ENCODE measurements at regions of chr3 and their contacts with region 1.

Region 1: DNA sequence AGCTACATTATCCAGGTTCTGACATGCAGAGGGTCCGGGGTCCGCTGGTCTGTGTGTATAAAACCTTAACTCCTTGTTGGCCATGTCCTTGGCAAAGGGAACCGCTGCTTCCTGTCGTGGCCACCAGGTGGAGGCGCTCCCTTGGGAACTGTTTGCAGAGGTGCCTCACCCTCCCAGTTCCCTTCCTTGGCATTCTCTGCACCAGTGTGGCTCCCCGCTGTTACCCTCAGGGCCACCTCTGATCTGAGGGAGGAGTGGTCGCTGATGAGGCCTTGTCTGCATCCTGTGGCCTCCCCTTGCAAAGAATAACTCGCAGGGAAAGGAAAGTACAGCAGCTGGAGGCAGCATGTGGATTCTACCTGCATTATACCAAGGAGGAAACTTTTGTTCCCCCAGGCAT is 89.6 kb downstream of the CHRD start:
- DNase-seq: no peak
- ATAC-seq: no peak
- H3K4me3 ChIP-seq: no peak overlapping the region
- H3K27ac ChIP-seq: no peak overlapping the region
- H3K4me1 ChIP-seq: peaks cover 0 to 20% (median 13%) of the 10 kb centered on the region in 12 donors
- H3K27me3 ChIP-seq: peaks cover 0 to 4% (median 0%) of the 10 kb centered on the region in 9 donors
- CTCF ChIP-seq: peak in 9 of 12 donors; percentile 7 to 37 (median 30)
- POLR2A ChIP-seq: no peak

Region 2: GRCh38 chr3:183924956-183925355 is 544.5 kb before region 1 on chr3:
- intact Hi-C with region 1: no loop called
- DNase-seq: no peak
- ATAC-seq: no peak
- H3K4me3 ChIP-seq: no peak overlapping the region
- H3K27ac ChIP-seq: no peak overlapping the region
- H3K4me1 ChIP-seq: no peaks in the 10 kb centered on the region
- H3K27me3 ChIP-seq: no peaks in the 10 kb centered on the region
- CTCF ChIP-seq: no peak
- POLR2A ChIP-seq: no peak

Region 3: DNA sequence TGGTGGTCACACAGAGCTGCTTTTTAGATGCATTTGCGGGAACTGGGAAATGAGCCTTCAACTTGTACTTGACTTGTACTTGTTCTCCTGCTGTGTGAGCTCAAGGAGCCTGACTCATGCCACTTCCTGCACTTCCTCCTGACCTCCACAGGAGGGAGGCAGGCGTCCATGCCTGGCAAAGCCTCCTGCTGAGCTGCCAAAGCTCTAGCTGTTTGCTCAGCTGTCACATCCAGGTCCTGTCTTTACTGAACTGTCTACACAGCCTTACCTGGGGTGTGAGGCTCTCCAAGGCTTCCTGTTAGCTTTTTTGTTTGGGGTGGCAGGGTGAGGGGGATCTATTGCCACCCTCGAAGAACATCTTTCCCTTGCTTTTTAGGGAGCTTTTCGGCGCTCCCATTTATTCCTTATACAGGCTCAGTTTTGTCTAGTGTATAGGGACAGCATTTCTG is 97.8 kb before region 1 on chr3:
- intact Hi-C with region 1: loop called in 1 of 10 experiments (anchors 5 kb)
- DNase-seq: peak; percentile 71 to 88 (median 85)
- ATAC-seq: peak; percentile 78 to 91 (median 87)
- H3K4me3 ChIP-seq: no peak overlapping the region
- H3K27ac ChIP-seq: peak overlapping the region in 1 of 12 donors; percentile 10
- H3K4me1 ChIP-seq: peaks cover 0 to 32% (median 17%) of the 10 kb centered on the region in 12 donors
- H3K27me3 ChIP-seq: peaks cover 0 to 11% (median 4%) of the 10 kb centered on the region in 9 donors
- CTCF ChIP-seq: peak; percentile 88 to 97 (median 94)
- POLR2A ChIP-seq: no peak

Region 4: GRCh38 chr3:184417619-184418327 is 51.6 kb before region 1 on chr3:
- intact Hi-C with region 1: loop called in 2 of 10 experiments (anchors 5 kb)
- DNase-seq: peak; percentile 59 to 83 (median 69)
- ATAC-seq: peak; percentile 47 to 93 (median 90)
- H3K4me3 ChIP-seq: no peak overlapping the region
- H3K27ac ChIP-seq: no peak overlapping the region
- H3K4me1 ChIP-seq: peaks cover 0 to 4% (median 0%) of the 10 kb centered on the region in 12 donors
- H3K27me3 ChIP-seq: no peaks in the 10 kb centered on the region
- CTCF ChIP-seq: peak; percentile 63 to 88 (median 82)
- POLR2A ChIP-seq: no peak

Region 5: DNA sequence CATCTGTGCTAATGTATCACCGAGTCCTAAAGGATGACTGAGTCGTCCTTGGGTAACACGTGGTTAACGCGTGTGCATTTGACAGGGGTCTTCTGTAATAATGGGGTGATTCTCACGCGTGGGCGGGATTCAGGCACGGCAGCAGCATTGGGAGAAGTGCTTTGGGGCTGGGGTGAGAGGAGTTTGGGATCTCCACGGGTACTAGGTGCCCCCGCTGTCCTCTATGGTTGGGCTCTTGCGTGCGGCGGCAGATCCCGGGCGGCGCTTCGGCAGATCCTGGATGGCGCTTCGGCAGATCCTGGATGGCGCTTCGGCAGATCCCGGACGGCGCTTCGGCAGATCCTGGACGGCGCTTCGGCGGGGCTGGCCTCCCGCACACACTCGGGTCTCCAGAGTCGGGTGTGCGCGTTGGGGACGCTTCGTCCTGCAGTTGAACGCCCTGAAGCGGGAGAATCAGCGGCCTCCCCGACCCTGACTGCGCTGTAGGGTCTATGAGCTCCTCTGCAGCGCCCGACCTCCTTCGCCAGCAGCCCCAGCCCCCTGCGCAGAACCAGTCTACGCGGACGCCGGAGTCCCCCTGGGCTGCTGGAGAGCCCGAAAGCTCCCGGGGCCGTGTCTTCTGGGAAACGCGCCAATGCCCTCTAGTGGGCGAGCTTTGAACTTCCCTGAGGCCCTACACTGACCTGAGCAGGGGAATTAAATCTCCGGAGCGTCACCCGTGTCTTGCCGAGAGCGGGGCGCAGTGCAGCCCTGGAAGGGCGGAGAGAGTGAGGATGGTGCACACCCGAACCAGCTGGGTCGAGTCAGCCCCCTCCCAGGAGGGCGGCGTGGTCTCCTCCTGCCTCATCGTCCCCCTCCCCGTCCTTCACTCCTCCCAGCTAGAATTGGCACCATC is 44.1 kb after region 1 on chr3:
- intact Hi-C with region 1: loop called in 2 of 10 experiments (anchors 5 kb)
- DNase-seq: peak; percentile 85 to 90 (median 87)
- ATAC-seq: peak; percentile 96 to 99 (median 98)
- H3K4me3 ChIP-seq: peak overlapping the region in 11 of 12 donors; percentile 15 to 60 (median 50)
- H3K27ac ChIP-seq: peak overlapping the region in 6 of 12 donors; percentile 34 to 45 (median 37)
- H3K4me1 ChIP-seq: peaks cover 0 to 21% (median 9%) of the 10 kb centered on the region in 12 donors
- H3K27me3 ChIP-seq: peaks cover 0 to 58% (median 19%) of the 10 kb centered on the region in 9 donors
- CTCF ChIP-seq: peak; percentile 78 to 90 (median 86)
- POLR2A ChIP-seq: no peak

Region 6: GRCh38 chr3:184525337-184526087 is 56.1 kb after region 1 on chr3:
- intact Hi-C with region 1: loop called in 1 of 10 experiments (anchors 5 kb)
- DNase-seq: no peak
- ATAC-seq: peak in 3 of 4 donors; percentile 50 to 71 (median 53)
- H3K4me3 ChIP-seq: peak overlapping the region; percentile 18 to 68 (median 58)
- H3K27ac ChIP-seq: peak overlapping the region in 11 of 12 donors; percentile 16 to 92 (median 81)
- H3K4me1 ChIP-seq: peaks cover 0 to 26% (median 12%) of the 10 kb centered on the region in 12 donors
- H3K27me3 ChIP-seq: peaks cover 0 to 60% (median 35%) of the 10 kb centered on the region in 9 donors
- CTCF ChIP-seq: no peak
- POLR2A ChIP-seq: no peak

Measured in heart left ventricle (tissue), 16 donors.